ENCODE measurements at regions of chr1 and their contacts with region 1.

Region 1: GRCh38 chr1:27253596-27253995 is 19.2 kb downstream of the WDTC1 start:
- H3K4me3 ChIP-seq: no peak overlapping the region
- H3K27ac ChIP-seq: no peak overlapping the region
- H3K4me1 ChIP-seq: no peaks in the 10 kb centered on the region
- CTCF ChIP-seq: no peak

Region 2: DNA sequence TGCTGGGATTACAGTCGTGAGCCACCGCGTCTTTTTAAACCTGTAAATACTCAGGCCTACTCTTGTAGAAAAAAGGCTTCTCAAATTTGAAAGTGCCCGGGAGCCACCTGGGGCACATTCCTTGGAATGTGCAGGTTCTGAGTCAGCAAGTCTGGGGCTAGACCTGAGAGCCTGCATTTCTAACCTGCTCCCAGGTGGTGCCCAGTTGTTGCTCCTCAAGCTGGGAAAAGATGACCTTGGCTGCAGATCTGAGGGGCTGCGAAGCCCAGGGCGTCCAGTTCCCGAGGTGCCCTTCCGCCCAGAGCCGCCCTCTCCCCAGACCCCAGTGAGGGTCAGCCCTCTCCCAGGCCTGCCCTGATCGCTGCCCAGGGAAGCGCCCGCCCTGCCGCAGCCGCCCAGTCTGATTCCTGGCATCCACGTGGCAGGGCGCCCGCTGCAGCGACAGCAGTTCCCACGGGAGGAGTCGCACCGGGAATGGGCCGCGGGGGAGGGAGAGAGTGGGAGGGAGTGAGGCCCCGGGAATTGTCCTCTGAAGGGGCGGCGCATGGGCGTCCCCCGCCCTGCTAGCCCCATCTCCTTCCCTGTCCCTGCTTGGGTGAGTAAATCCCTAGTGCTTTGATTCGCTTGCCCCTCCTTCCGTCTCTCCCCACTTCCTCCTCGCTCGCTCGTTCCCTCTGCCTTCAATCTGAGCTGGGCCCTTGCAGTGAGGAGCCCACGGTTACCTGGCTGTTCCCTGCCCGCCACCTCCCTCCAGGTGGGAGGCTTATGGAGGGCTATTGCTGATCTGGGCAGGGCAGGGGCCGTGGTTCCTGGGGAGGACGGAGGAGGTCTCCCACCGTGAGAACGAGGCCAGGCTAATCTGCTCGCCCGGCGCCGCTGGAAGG is 222.1 kb before region 1 on chr1:
- CTCF ChIA-PET with region 1: no interaction called
- POLR2A ChIA-PET with region 1: no interaction called
- H3K4me3 ChIP-seq: no peak overlapping the region
- H3K27ac ChIP-seq: no peak overlapping the region
- H3K4me1 ChIP-seq: no peaks in the 10 kb centered on the region
- CTCF ChIP-seq: no peak

Region 3: DNA sequence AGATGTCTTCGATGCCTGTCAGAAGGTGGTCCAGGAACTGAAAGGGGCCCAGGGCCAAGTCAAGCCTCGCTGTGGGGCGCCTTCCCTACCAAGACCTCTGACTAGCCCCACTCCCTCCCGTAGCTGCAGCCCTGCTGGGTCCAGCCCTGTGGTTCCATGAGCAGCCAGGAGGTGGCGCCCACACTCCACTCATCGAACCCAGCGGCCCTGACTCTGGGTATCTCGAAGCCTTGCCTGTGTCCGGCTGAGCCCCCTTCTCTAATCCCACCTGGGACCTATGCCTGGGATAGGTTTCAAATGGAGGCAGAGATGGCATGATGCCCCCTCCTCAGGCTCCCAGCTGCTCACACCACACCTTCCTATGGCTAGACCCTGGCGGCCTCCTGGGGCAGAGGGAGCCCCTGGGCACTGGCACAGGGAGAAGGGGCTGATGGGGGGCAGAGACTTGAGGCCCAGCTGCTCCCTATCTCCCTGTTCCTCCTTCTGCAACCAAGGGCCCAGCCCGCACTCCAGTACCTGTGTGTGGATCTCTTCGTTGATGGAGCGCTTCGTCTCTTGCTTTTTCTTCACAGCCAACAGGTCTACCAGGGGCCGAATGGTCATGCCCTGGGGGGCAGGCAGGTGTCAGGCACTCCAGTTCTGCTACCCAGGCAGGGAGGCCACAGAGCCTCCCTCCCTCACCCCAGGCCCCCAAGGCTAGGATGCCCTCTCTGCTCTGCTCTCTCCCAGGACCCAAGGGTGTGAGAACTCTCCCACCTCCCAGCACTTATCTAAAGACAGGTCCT is 150.7 kb before region 1 on chr1:
- CTCF ChIA-PET with region 1: interaction called, 10 read pairs
- POLR2A ChIA-PET with region 1: no interaction called
- H3K4me3 ChIP-seq: no peak overlapping the region
- H3K27ac ChIP-seq: no peak overlapping the region
- H3K4me1 ChIP-seq: peaks cover 8% of the 10 kb centered on the region
- CTCF ChIP-seq: peak; percentile 94

Region 4: GRCh38 chr1:27704958-27705357 is 451.4 kb after region 1 on chr1:
- CTCF ChIA-PET with region 1: no interaction called
- POLR2A ChIA-PET with region 1: no interaction called
- H3K4me3 ChIP-seq: no peak overlapping the region
- H3K27ac ChIP-seq: no peak overlapping the region
- H3K4me1 ChIP-seq: no peaks in the 10 kb centered on the region
- CTCF ChIP-seq: no peak